ENCODE measurements at regions of chr3 and their contacts with region 1.

Region 1: DNA sequence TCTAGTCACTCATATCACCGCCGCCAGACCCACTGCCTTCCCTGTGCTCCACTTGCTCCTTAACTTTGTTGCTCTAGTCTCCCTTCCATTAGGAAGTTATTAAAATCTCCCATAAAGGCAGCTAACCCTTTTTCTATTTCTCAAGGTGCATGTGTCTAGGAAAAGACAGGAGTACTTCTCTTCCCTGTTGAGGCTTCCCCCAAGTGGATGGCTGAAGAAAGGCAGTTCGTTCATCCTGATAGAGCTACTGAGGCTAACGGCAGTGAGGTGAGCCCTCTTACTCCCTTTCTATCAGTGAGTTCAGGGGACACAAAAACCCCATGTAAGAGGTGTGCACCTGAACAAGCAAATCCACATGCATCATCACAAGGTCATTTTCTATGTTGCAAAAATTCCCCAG is 397.8 kb downstream of the IGSF11 start:
- DNase-seq: no peak
- ATAC-seq: peak; percentile 38; the same call in 1 of the 2 replicates
- H3K4me3 ChIP-seq: no peak overlapping the region
- H3K27ac ChIP-seq: no peak overlapping the region
- H3K4me1 ChIP-seq: no peaks in the 10 kb centered on the region
- H3K27me3 ChIP-seq: no peaks in the 10 kb centered on the region
- CTCF ChIP-seq: peak in 2 of 3 experiments; percentile 32 to 34; a peak in 4 of 6 replicates
- POLR2A ChIP-seq: no peak
- RAD21 ChIP-seq: peak; percentile 30; the same call in 1 of the 2 replicates

Region 2: GRCh38 chr3:118817748-118818165 is 180.9 kb after region 1 on chr3:
- CTCF ChIA-PET with region 1: no interaction called
- POLR2A ChIA-PET with region 1: no interaction called
- RAD21 ChIA-PET with region 1: no interaction called
- intact Hi-C with region 1: loop called (anchors 10 kb)
- DNase-seq: peak; percentile 56
- ATAC-seq: peak; percentile 93
- H3K4me3 ChIP-seq: no peak overlapping the region
- H3K27ac ChIP-seq: no peak overlapping the region
- H3K4me1 ChIP-seq: no peaks in the 10 kb centered on the region
- H3K27me3 ChIP-seq: no peaks in the 10 kb centered on the region; the same call in 1 of the 2 replicates
- CTCF ChIP-seq: peak; percentile 61 to 90 (median 73); a peak in 5 of 6 replicates
- POLR2A ChIP-seq: no peak
- RAD21 ChIP-seq: peak; percentile 83

Region 3: GRCh38 chr3:118973050-118973449 is 336.2 kb after region 1 on chr3:
- CTCF ChIA-PET with region 1: no interaction called
- POLR2A ChIA-PET with region 1: no interaction called
- RAD21 ChIA-PET with region 1: no interaction called
- intact Hi-C with region 1: no loop called
- DNase-seq: no peak
- ATAC-seq: no peak
- H3K4me3 ChIP-seq: no peak overlapping the region
- H3K27ac ChIP-seq: no peak overlapping the region
- H3K4me1 ChIP-seq: no peaks in the 10 kb centered on the region
- H3K27me3 ChIP-seq: peaks cover 83% of the 10 kb centered on the region
- CTCF ChIP-seq: no peak
- POLR2A ChIP-seq: no peak
- RAD21 ChIP-seq: no peak

Measured in HCT116 (cell line).